Activated CD4-positive, alpha-beta memory T cell treated with anti-CD3 and anti-CD28 coated beads for 36 hours (primary cell): ENCODE measurements at regions of chr19 and their contacts with region 1.

Region 1: DNA sequence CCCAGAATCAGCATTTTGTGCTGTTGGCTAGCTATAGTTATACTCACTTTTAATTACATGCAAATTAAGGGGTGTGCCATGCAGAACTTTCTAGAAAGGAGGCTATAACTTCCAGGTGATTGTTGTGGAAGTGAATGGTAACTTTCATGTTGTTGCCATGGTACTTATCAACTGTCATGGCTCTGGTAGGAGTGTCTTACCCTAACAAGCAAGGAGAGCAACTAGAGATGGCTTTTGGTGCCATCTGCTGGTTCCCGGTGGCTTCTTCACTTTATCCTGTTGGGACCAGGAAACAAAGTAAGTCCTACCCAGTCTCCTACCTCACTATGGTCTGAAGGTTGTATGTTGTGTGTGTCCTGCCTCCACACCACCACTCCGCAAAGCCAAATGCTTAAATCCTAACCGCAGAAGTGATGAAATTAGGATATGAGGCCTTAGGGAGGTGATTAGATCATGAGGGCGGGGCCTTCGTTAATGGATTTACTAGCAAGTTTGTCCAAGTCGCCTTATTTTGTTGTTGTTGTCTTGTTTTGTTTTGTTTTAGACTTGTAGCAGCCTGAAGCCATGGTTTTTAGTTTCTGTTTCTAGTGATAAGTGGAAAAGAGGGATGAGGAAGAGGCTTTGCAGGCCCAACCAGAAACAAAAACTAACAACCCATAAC is 22.6 kb downstream of the FBXL12 start:
- DNase-seq: peak; percentile 92
- H3K4me3 Mint-ChIP-seq: no peak overlapping the region
- H3K27ac Mint-ChIP-seq: peak overlapping the region; percentile 64
- H3K4me1 Mint-ChIP-seq: peaks cover 19% of the 10 kb centered on the region
- H3K27me3 Mint-ChIP-seq: no peaks in the 10 kb centered on the region

Region 2: DNA sequence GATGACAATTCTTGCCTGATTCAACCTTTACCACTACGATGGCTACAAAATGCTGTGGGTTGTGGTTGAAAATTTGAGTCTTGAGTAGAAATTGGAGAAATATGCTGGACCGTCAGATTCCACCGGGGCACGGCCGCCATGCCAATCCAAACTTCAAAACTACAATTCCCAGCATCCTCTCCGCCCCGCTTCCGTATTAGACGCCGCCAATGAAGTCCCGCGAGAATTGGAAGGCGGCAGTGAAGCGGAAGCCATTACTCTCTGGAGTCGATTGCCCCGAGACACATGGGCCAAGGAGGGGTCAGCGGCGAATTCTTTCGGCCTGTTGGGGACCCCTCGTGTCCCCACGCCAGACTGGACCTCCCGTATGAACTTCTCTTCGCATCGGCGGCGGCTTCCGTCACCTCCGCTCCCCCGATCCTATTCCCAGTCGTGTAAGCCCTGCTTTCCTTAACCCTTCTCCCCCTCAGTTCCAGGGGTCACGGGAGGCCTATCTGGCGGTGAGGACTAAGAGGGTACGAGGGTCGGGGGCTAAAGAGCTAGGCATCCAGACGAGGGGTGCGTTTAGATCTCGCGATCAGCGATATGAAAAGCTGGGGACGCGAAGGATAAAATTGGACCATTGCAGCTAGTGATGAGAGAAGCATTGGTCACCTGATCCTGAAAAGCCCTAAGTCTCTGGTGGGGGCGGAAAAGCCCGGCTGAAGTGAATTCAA is 655.9 kb before region 1 on chr19 and contains the start of gene ZNF317:
- CTCF ChIA-PET with region 1: interaction called, 3 read pairs
- POLR2A ChIA-PET with region 1: no interaction called
- intact Hi-C with region 1: loop called (anchors 2 kb)
- DNase-seq: peak; percentile 93
- H3K4me3 Mint-ChIP-seq: peak within 1 kb of the TSS; percentile 98
- H3K27ac Mint-ChIP-seq: peak within 1 kb of the TSS; percentile 94
- H3K4me1 Mint-ChIP-seq: peaks cover 36% of the 10 kb centered on the region
- H3K27me3 Mint-ChIP-seq: no peaks in the 10 kb centered on the region
- total RNA-seq, gene ZNF317: 31.8 to 31.9 TPM

Region 3: DNA sequence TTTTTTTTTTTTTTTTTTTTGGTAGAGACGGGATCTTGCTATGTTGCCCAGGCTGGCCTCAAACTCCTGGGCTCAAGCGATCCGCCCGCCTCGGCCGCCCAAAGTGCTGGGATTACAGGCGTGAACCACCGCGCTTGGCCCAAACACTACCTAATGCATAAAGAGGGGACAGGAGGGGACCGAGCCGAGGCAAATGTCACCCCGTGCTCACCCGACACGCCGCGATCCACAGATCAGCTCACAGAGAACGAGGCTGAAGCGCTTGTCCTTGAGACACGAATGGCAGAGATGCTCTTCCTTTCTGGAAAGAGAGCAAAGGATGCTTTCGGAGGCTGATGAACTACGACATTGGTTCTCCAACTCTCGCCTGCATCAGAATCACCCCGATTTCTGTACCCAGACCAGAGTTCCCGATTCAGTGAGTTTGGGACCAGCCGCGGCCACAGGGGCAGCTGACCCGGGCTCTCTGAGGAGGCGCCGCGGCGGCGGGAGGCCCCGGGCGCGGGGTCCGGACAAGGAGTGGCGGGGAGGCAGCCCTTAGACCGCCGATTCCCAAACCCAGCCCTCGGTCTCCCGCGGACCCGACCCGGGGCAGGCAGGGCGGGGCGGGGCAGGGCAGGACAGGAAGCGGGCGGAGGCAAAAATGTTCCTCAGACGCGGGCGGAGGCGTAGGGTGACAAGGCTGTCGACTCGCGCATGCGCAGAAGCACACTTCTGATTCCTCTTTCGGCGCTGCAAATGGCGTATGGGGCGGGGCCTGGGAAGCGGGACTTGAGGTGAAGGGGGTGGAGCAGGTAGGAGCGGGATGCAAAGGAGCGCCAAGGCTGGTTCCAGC is 486.9 kb before region 1 on chr19 and contains the start of gene ZNF699:
- CTCF ChIA-PET with region 1: no interaction called
- POLR2A ChIA-PET with region 1: no interaction called
- intact Hi-C with region 1: loop called (anchors 1 kb)
- DNase-seq: peak; percentile 99
- H3K4me3 Mint-ChIP-seq: peak within 1 kb of the TSS; percentile 92
- H3K27ac Mint-ChIP-seq: peak within 1 kb of the TSS; percentile 89
- H3K4me1 Mint-ChIP-seq: peaks cover 12% of the 10 kb centered on the region
- H3K27me3 Mint-ChIP-seq: no peaks in the 10 kb centered on the region
- total RNA-seq, gene ZNF699: 5.8 to 6.8 TPM

Region 4: DNA sequence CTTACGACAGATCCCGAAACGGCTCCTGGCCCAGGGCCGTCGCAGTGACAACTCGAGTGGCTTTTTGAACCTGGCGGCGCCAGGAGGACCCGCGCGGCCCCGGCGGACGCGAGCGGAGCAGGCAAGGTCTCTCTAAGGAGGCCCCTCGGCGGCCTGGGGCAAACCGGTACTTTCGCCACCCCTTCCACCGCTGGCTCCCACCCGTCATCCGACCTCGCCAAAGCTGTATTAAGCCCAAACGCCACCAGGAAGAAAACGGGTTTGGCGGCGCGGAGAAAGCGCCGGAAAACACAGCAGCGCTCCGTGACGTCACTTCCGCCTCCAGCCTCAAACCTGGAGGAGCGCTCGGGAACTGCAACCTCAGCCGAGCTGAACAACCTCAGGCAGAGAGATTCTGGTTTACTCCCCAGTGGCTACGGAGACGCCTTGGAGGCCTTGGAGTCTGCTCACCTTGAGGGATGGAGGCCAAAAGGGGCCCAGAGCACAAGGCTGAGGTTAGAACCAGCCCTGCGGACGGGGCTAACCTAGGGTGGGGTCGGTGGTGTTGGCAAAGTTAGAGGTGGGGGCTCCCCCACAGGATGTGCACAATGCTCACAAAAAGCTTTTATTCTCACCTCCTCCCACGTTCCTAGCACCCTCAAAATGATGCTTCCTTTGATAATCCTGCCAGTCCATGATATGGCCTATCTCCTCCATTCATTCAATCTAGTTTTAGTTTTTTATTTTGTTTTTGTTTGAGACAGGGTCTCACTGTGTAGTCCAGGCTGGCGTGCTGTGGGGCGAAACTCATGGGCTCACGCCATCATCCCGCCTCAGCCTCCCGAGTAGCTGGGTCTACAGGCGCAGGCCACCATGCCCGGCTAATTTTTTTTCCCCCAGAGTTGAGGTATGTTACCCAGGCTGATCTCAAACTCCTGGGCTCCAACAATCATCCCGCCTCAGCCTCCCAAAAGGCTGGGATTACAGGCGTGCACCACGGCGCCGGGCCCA is 360.7 kb before region 1 on chr19 and contains the start of gene ZNF266:
- CTCF ChIA-PET with region 1: no interaction called
- POLR2A ChIA-PET with region 1: no interaction called
- intact Hi-C with region 1: loop called (anchors 10 kb)
- DNase-seq: peak; percentile 96
- H3K4me3 Mint-ChIP-seq: peak within 1 kb of the TSS; percentile 94
- H3K27ac Mint-ChIP-seq: peak within 1 kb of the TSS; percentile 98
- H3K4me1 Mint-ChIP-seq: peaks cover 33% of the 10 kb centered on the region
- H3K27me3 Mint-ChIP-seq: no peaks in the 10 kb centered on the region
- total RNA-seq, gene ZNF266: 20.0 to 23.4 TPM

Region 5: GRCh38 chr19:9621156-9622037 is 174.8 kb before region 1 on chr19 and contains the start of gene ZNF561:
- CTCF ChIA-PET with region 1: interaction called, 26 read pairs
- POLR2A ChIA-PET with region 1: no interaction called
- intact Hi-C with region 1: loop called (anchors 1 kb)
- DNase-seq: peak; percentile 91
- H3K4me3 Mint-ChIP-seq: peak within 1 kb of the TSS; percentile 92
- H3K27ac Mint-ChIP-seq: peak within 1 kb of the TSS; percentile 99
- H3K4me1 Mint-ChIP-seq: peaks cover 22% of the 10 kb centered on the region
- H3K27me3 Mint-ChIP-seq: no peaks in the 10 kb centered on the region
- total RNA-seq, gene ZNF561: 24.7 to 25.5 TPM

Region 6: GRCh38 chr19:9768175-9769112 is 27.8 kb before region 1 on chr19 and contains the start of gene ZNF846:
- CTCF ChIA-PET with region 1: interaction called, 9 read pairs
- POLR2A ChIA-PET with region 1: no interaction called
- intact Hi-C with region 1: loop called (anchors 1 kb)
- DNase-seq: peak; percentile 96
- H3K4me3 Mint-ChIP-seq: peak within 1 kb of the TSS; percentile 97
- H3K27ac Mint-ChIP-seq: peak within 1 kb of the TSS; percentile 98
- H3K4me1 Mint-ChIP-seq: peaks cover 6% of the 10 kb centered on the region
- H3K27me3 Mint-ChIP-seq: no peaks in the 10 kb centered on the region
- total RNA-seq, gene ZNF846: 3.9 to 4.9 TPM

Region 7: GRCh38 chr19:9818734-9819589 is 22.7 kb after region 1 on chr19 and contains the start of gene FBXL12:
- CTCF ChIA-PET with region 1: interaction called, 3 read pairs
- POLR2A ChIA-PET with region 1: interaction called, 6 read pairs
- intact Hi-C with region 1: loop called (anchors 1 kb)
- DNase-seq: peak; percentile 100
- H3K4me3 Mint-ChIP-seq: peak within 1 kb of the TSS; percentile 88
- H3K27ac Mint-ChIP-seq: peak within 1 kb of the TSS; percentile 91
- H3K4me1 Mint-ChIP-seq: peaks cover 28% of the 10 kb centered on the region
- H3K27me3 Mint-ChIP-seq: no peaks in the 10 kb centered on the region
- total RNA-seq, gene FBXL12: 20.7 to 22.0 TPM

Region 8: DNA sequence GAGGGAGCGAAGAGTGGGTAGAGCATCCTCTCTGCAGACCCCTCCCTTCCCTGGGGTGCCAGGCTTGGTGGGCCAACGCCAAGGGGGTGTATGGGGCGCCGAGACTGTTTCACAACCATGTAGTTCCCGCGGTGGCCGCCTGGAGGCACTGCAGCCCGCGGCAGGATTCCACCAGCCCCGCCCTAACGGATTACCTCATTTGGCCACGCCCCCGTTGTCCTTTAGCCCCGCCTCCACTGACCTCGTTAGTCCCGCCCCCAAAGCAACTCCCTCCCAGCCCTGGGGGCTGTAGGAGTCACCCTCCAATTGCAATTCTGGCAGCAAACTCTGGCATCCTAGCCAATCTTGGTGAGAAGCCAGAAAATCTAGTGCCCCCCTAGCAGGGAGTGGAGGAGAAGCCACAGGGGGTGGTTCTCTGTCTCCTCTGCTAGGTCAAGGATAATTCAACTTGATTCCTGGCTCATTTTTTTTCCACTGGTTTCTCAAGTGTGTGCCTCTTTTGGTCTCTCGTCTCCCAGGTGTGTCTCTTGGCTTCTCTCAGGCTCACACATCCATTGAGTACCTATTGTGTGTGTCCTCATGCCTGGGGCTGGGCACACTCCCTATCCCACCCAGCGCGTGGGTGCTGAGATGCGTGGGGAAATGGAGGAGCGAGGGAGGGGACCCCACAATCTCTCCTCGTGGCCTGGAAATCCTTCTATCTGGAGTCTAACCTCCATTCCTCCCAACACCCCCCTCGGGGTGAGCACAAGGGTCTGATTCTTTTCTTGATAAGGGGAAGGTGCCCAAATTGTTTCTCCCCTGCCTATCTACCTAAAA is 138.1 kb after region 1 on chr19:
- CTCF ChIA-PET with region 1: no interaction called
- POLR2A ChIA-PET with region 1: no interaction called
- intact Hi-C with region 1: no loop called
- DNase-seq: peak; percentile 90
- H3K4me3 Mint-ChIP-seq: no peak overlapping the region
- H3K27ac Mint-ChIP-seq: no peak overlapping the region
- H3K4me1 Mint-ChIP-seq: peaks cover 28% of the 10 kb centered on the region
- H3K27me3 Mint-ChIP-seq: peaks cover 46% of the 10 kb centered on the region